AG04450 (cell line): ENCODE measurements at regions of chr1 and their contacts with region 1.

Region 1: DNA sequence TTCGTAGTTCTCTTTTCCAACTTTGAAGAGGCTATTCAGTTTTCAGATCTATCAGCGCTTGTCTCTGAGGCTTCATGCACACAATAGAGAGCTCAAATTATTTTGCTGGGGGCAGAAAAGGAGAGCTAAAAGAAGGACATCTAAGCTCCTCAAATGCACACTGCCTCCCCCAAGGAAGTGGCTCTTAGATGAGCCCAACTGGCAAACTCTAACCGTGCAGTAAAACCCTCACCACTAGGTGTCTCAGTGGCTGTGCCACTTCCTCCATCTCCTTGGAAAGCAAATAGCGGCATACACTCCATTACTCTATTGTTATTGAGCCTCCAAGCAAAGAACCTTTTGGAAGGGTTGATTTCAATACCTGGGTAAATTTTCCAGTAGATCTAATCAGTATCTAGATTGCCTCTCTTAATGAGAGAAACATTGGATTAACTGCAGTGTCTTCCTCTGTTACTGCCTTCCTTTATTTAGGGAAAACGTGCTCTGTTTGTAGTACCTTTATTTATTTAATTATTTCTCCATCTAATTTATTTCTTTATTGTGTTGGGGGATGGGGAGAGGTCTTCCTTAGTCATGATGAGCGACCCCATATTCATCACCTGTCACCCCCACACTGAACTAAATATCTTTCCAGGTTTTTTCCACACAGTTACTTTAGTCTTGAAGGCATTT is 9.2 kb upstream of the SFPQ start:
- DNase-seq: peak; percentile 59
- H3K4me3 ChIP-seq: no peak overlapping the region
- H3K27ac ChIP-seq: no peak overlapping the region
- H3K27me3 ChIP-seq: no peaks in the 10 kb centered on the region
- CTCF ChIP-seq: peak; percentile 93

Region 2: DNA sequence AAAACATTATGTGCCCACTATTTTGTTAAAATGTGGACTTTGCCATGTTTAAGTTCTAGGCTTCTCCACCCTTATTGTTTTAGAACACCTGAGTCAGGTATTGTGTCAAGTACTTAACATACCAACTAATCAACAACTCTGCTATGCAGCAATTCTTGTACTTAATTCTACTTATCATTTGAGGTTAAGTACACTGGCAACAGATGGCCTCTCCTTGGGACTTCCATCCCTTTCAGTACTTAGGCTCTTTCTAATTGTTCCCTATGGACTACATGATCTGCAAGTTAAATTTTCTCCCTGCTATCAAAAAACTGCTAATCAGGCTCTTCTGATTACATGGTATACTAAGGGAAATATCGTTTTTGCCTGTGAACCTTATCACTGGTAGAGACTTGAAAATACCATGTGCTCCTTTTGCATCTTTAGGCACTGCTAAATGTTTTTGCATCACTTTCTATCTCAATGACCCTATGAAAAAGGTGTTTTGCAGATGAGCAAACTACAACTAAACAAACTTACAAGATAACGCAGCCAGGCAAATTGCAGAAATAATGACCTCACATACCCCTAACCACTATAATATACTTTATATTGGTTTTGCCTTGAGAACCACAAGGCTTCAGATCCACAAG is 28.2 kb before region 1 on chr1:
- CTCF ChIA-PET with region 1: no interaction called
- POLR2A ChIA-PET with region 1: no interaction called
- DNase-seq: no peak
- H3K4me3 ChIP-seq: no peak overlapping the region
- H3K27ac ChIP-seq: no peak overlapping the region
- H3K27me3 ChIP-seq: no peaks in the 10 kb centered on the region
- CTCF ChIP-seq: no peak

Region 3: DNA sequence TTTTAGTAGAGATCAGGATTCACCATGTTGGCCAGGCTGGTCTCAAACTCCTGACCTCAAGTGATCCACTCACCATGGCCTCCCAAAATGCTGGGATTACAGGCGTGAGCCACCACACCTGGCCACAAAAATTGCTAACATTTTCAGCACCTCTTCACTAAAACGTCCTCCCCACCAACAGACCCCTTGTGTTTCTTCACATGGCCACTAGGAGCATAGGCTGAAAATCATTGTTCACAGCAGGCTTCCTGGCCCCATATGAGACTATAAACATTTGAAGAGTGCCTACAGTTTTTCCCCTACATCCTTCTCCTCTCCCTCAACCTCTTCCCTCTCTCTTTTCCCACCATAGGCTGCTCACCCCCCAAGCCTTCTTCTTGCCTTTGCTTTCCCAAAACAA is 18.8 kb after region 1 on chr1:
- CTCF ChIA-PET with region 1: interaction called, 19 read pairs
- POLR2A ChIA-PET with region 1: interaction called, 3 read pairs
- DNase-seq: no peak
- H3K4me3 ChIP-seq: no peak overlapping the region
- H3K27ac ChIP-seq: no peak overlapping the region
- H3K27me3 ChIP-seq: no peaks in the 10 kb centered on the region
- CTCF ChIP-seq: peak; percentile 50

Region 4: DNA sequence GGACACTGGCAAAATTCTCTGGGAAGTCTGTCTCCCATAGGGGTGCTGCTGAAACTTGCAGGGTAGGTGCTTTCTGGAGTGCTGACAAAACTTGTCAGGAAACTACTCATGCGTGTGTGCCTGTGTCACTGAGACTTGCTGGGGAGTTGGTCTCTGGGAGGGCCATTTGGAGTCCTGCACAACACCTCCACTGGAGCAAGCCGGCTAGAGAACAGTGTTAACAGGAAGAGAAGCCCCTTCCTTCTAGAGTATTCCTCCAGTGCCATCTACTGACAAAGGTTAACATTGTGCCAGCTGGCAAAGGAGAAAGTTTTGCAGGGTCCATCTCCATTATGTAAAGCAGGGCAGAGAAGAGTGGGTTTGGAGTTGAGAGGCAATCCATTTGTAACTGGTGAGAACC is 96.3 kb after region 1 on chr1:
- CTCF ChIA-PET with region 1: interaction called, 22 read pairs
- POLR2A ChIA-PET with region 1: interaction called, 4 read pairs
- DNase-seq: no peak
- H3K4me3 ChIP-seq: no peak overlapping the region
- H3K27ac ChIP-seq: no peak overlapping the region
- H3K27me3 ChIP-seq: no peaks in the 10 kb centered on the region
- CTCF ChIP-seq: peak; percentile 53

Region 5: GRCh38 chr1:35324486-35324885 is 122.3 kb after region 1 on chr1:
- CTCF ChIA-PET with region 1: interaction called, 10 read pairs
- POLR2A ChIA-PET with region 1: no interaction called
- DNase-seq: no peak
- H3K4me3 ChIP-seq: no peak overlapping the region
- H3K27ac ChIP-seq: no peak overlapping the region
- H3K27me3 ChIP-seq: no peaks in the 10 kb centered on the region
- CTCF ChIP-seq: no peak